ENCODE measurements at regions of chr17 and their contacts with region 1.

Region 1: DNA sequence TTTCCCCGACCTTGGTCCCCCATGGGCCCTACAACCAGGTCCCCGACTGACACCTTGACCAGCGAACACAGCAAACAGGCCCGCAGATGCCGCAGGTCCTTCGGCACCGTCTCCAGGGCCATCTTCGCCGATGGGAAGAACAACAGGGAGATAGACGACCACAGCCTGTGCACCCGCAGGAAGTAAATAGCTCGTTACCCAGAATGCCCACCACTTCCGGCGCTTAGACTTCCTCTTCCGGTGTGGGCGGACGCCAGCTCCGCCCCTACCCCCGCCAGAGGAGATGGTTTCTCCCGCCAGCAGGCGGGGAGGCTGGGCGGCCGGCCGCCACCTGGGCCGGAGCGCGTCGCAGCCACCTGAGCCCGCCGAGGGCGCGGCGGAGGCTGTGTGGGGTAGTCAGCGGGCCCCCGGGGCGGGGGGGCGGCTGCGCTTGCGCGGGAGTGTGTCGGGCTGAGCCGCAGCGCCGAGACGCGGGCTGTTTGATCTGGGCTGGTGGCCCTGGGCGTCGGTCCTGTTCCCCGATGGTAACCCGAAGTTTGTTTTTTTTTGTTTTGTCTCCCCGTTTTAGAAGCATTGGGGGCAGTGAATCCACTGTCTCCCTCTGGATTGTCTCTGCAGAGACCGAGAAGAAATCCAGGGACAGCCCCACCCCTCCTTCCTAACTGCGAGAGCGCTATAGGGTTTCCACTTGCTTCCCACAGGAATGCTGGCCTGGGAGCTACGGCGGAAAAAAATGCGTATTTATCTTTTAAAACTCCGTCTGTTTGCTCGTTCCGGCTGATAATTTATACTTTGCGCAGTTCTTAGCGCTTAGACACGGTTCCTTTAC is at the start of gene SUPT4H1:
- DNase-seq: peak; percentile 92
- ATAC-seq: peak; percentile 94
- H3K4me3 Mint-ChIP-seq: peak within 1 kb of the TSS; percentile 100
- H3K27ac Mint-ChIP-seq: peak within 1 kb of the TSS; percentile 99
- H3K4me1 Mint-ChIP-seq: peaks cover 47% of the 10 kb centered on the region
- H3K27me3 Mint-ChIP-seq: no peaks in the 10 kb centered on the region
- total RNA-seq, gene SUPT4H1: 66.4 to 70.2 TPM

Region 2: DNA sequence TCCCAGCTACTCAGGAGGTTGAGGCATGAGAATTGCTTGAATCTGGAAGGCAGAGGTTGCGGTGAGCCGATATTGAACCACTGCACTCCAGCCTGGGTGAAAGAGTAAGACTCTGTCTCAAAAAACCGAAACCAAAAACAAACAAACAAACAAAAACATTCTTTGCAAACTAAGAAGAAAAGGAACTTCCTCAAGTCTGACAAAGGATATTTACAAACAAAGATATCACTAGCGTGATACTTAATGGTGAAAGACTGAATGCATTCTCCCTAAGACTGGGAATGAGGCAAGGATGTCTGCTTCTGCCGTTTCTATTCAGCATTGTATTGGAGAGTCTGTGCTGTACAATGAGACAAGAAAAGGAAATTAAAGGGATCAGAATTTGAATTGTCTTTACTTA is 61.0 kb before region 1 on chr17:
- POLR2A ChIA-PET with region 1: no interaction called
- DNase-seq: no peak
- ATAC-seq: no peak
- H3K4me3 Mint-ChIP-seq: no peak overlapping the region
- H3K27ac Mint-ChIP-seq: no peak overlapping the region
- H3K4me1 Mint-ChIP-seq: no peaks in the 10 kb centered on the region
- H3K27me3 Mint-ChIP-seq: peaks cover 37% of the 10 kb centered on the region

Region 3: GRCh38 chr17:58317421-58318064 is 34.7 kb before region 1 on chr17:
- POLR2A ChIA-PET with region 1: interaction called, 2,283 read pairs
- DNase-seq: peak; percentile 56
- ATAC-seq: peak; percentile 91
- H3K4me3 Mint-ChIP-seq: peak overlapping the region; percentile 37
- H3K27ac Mint-ChIP-seq: peak overlapping the region; percentile 76
- H3K4me1 Mint-ChIP-seq: peaks cover 12% of the 10 kb centered on the region
- H3K27me3 Mint-ChIP-seq: peaks cover 1% of the 10 kb centered on the region

Region 4: GRCh38 chr17:58329035-58329809 is 23.0 kb before region 1 on chr17:
- POLR2A ChIA-PET with region 1: interaction called, 2,283 read pairs
- DNase-seq: peak; percentile 80
- ATAC-seq: peak; percentile 11
- H3K4me3 Mint-ChIP-seq: peak overlapping the region; percentile 93
- H3K27ac Mint-ChIP-seq: peak overlapping the region; percentile 97
- H3K4me1 Mint-ChIP-seq: peaks cover 49% of the 10 kb centered on the region
- H3K27me3 Mint-ChIP-seq: no peaks in the 10 kb centered on the region

Region 5: GRCh38 chr17:58337600-58338453 is 14.4 kb before region 1 on chr17:
- POLR2A ChIA-PET with region 1: interaction called, 2,283 read pairs
- DNase-seq: peak; percentile 92
- ATAC-seq: peak; percentile 62
- H3K4me3 Mint-ChIP-seq: peak overlapping the region; percentile 93
- H3K27ac Mint-ChIP-seq: peak overlapping the region; percentile 97
- H3K4me1 Mint-ChIP-seq: peaks cover 37% of the 10 kb centered on the region
- H3K27me3 Mint-ChIP-seq: no peaks in the 10 kb centered on the region

Region 6: DNA sequence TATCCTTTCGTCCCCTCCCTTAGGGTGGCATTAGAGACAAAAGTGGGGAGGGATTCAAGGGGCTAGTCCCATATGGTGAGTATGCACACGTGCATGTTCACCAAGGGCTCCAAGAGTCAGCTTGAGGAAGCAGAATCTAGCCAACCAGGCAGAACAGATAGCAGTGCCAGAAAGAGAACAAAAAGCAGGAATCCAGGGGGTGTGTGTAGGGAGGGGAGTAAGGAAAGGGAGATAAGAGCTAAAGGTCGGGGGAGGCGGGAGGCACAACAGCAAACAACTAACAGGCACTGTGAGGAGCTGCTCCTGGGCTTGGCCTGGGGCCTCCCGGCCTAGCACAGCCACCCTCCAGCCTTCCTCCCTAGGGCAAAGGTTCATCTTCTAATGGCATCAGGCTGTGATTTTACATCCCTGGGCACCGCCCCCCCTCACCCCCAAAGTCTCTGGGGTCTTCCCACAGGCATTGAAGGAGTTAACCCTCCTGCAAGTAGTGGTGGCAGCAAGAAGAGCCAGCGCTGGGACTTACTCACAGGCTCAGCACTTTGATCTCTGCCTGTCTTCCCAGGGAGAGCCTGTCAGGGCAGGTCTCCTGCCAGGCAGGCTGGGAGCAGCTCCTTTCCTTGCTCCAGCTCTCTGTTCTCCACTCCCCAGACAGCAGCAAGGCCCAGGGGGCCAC is 12.2 kb after region 1 on chr17:
- POLR2A ChIA-PET with region 1: interaction called, 10 read pairs
- DNase-seq: no peak
- ATAC-seq: no peak
- H3K4me3 Mint-ChIP-seq: no peak overlapping the region
- H3K27ac Mint-ChIP-seq: no peak overlapping the region
- H3K4me1 Mint-ChIP-seq: peaks cover under 1% of the 10 kb centered on the region
- H3K27me3 Mint-ChIP-seq: no peaks in the 10 kb centered on the region

Region 7: DNA sequence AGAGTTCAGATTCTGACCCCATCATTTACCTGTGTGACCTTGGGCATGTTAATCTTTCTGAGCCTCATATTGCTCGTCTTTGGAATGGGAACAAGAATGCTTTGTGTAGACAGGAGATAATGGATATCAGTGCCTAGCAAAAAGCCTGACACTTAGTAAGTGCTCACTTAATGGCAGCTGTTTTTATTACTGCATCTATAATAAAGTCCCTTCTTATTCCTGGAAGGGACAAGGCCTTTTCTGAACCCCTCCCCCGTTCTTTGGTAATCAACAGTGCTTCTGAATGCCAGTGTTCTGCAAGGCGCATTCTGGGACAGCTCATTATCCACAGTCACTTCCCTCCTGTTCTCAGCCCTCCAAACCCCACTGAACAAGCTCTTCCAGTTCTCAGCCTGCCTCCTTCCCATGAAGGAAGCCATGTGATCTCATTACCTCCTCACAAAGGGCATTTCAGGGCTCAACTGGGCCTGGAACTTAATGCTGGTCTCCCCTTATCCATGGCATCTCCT is 24.9 kb after region 1 on chr17:
- POLR2A ChIA-PET with region 1: interaction called, 12 read pairs
- DNase-seq: no peak
- ATAC-seq: no peak
- H3K4me3 Mint-ChIP-seq: no peak overlapping the region
- H3K27ac Mint-ChIP-seq: no peak overlapping the region
- H3K4me1 Mint-ChIP-seq: peaks cover 49% of the 10 kb centered on the region
- H3K27me3 Mint-ChIP-seq: no peaks in the 10 kb centered on the region

Region 8: DNA sequence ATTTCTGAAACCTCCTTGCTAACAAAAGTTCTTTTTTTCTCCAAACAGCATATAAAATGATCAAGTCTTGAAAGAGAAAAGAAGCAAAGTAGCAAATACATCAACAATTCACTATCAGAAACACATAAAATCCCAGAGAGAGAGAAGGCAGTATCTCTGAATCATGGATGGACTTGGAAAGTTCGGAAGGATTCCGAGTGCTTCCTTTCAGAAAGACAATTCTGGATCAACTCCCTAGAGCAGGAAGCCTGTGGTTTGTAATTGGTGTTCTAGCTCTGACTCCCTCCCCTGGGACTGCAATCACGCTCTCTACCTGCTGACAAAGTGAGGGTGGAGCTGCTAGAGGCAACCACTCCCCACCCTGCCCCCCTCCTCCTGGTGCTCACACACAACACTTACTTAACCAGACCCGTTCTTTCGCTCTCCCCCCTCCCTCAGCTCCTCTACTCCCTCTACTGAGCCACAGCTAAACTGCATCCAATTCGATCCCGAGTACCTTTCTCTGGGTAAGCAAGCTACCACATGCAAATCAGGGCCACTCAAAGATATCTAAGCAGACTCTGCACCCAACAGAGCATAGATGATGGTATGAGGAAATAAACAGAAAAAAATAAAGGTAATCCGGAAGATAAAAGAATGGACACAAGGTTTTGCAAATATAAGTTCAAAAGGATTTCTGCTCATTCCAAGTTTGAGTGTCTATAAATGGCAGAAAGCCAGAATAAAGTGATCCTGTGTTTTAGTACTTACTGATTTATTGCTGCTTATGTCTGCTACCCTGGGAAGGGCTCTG is 65.3 kb after region 1 on chr17 and contains the start of gene RNF43:
- POLR2A ChIA-PET with region 1: interaction called, 30 read pairs
- DNase-seq: peak; percentile 60
- ATAC-seq: peak; percentile 100
- H3K4me3 Mint-ChIP-seq: peak within 1 kb of the TSS; percentile 25
- H3K27ac Mint-ChIP-seq: peak within 1 kb of the TSS; percentile 37
- H3K4me1 Mint-ChIP-seq: peaks cover 10% of the 10 kb centered on the region
- H3K27me3 Mint-ChIP-seq: no peaks in the 10 kb centered on the region
- total RNA-seq, gene RNF43: 0.72 TPM in 1 of 2 experiments, not detected in the other

Region 9: GRCh38 chr17:58463821-58464220 is 111.6 kb after region 1 on chr17:
- POLR2A ChIA-PET with region 1: no interaction called
- DNase-seq: no peak
- ATAC-seq: no peak
- H3K4me3 Mint-ChIP-seq: no peak overlapping the region
- H3K27ac Mint-ChIP-seq: no peak overlapping the region
- H3K4me1 Mint-ChIP-seq: no peaks in the 10 kb centered on the region
- H3K27me3 Mint-ChIP-seq: peaks cover 2% of the 10 kb centered on the region